Dendritic cell treated with granulocyte-macrophage colony-stimulating factor and Interleukin-4, amounts not matched to agents 40 ng/mL and 50 ng/mL, for 4 days (primary cell): ENCODE measurements at regions of chr3 and their contacts with region 1.

Region 1: DNA sequence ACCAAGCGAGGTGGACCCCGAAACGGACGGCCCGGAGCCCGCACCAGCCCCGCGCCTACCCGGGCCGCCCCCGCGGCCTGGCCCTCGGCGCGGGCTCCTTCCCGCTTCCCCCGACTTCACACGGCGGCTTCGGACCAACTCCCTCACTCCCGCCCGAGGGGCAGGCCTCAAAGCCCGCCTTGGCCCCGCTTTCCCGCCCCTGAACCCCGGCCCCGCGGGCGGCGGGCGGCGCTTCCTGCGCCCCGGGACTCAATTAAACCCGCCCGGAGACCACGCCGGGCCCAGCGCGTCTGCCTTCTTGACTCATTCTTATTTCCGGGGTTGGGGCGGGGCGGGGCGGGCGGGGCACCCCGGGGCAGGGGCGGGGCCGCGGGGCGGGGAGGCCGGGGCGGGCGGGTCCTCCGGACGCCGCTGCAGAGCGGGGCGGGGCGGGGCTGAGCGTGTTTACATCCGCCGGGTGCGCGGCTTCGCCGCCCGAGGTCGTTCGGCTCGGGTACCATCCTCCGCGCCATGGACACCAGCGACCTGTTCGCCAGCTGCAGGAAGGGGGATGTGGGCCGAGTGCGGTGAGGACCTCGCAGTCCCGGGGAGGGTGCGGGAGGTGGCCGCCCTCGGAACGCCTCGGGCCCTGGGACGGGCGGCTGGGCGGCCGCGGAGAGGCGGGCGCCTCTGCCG is at the start of gene ABTB1:
- H3K4me3 Mint-ChIP-seq: peak within 1 kb of the TSS; percentile 81
- H3K27ac Mint-ChIP-seq: peak within 1 kb of the TSS; percentile 89
- H3K4me1 Mint-ChIP-seq: peaks cover 56% of the 10 kb centered on the region
- H3K27me3 Mint-ChIP-seq: no peaks in the 10 kb centered on the region

Region 2: DNA sequence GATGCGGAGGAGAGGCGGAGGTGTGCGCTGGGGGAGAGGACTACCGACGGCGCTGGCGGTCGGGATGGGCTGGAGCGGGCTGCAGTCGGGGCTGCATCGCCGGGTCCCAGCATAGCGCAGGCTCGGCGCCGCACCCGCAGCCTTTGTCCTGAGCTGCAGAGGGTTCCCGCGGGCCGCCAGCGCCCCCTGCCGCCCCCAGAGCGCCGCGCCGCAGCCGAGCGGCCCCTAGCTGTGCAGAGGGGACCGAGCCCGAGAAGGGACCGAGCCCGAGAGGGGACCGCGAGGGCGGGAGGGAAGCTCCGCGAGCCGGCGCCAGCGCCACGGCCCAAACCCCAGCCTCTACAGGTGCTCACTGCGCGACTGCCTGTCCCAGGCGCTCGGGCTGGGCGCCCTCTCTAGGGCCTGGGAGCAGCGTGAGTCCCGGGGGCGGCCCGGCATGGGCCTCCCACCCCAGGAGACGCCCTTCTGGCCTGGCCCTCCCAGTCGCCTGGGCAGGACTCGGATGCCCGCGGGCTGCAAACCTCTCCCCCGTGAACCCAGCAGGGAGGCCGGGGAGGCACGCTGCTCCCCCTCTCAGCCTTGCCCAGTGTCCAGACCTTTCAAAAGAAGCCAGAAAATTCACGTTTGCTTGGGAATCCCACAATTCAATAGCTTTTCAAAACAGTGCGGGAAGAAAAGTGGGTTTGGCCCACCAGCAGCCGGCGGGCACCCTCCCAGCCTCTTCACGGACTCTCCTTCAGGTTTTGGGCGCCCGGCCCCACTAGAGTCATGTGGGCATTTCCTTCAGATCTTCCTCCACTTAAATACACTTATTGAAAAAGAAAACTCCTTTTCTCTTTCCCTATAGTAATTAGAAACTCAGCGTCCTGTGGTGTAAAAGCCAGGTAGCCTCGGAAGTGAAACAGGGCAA is 216.9 kb before region 1 on chr3:
- intact Hi-C with region 1: no loop called
- H3K4me3 Mint-ChIP-seq: no peak overlapping the region
- H3K27ac Mint-ChIP-seq: no peak overlapping the region
- H3K4me1 Mint-ChIP-seq: peaks cover 18% of the 10 kb centered on the region
- H3K27me3 Mint-ChIP-seq: peaks cover 71% of the 10 kb centered on the region

Region 3: DNA sequence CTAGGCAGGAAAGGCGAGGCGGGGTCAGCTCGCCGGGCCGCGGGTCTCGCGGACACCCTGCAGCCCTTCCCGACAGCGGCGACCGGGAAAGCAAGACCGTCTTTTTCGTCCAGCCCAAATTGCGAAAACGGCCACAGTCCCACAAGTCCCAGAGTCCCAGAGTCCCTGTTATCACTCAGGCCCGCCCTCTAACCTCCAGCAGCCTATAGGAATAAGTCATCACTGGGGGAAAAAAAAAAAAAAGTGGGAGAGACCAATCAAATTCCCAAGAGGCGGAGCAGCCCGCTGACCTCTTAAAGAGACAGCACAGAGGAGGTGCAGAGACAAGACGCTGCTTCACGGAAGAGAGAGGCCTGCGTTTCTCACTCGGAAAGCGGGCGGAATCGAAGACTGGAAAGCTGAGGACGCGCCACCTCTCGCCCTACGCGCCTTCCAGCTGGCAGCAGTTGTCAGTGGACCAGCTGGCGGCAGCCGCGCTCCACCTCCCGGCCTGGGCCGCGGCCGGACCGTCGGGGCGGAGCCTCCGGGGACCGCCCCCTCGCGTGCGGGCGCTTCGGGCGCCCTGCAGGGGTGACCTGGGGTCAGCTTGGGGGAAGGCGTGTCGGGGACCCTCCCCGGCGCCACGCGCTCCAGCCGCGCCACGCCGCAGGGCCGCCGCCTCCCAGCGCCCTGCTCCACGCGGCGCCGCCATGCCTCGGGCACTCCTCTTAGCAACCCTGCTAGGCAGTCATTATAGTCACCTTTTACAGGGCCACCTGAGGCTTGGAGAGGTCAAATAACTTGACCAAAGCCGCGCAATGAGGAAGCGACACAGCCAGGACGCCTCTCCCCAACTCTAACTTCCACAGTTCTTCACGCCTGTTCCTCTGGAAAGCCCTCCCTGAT is 81.8 kb before region 1 on chr3 and contains the start of gene TPRA1:
- intact Hi-C with region 1: loop called (anchors 5 kb)
- H3K4me3 Mint-ChIP-seq: peak within 1 kb of the TSS; percentile 87
- H3K27ac Mint-ChIP-seq: peak within 1 kb of the TSS; percentile 98
- H3K4me1 Mint-ChIP-seq: peaks cover 54% of the 10 kb centered on the region
- H3K27me3 Mint-ChIP-seq: no peaks in the 10 kb centered on the region

Region 4: GRCh38 chr3:127615631-127616305 is 56.9 kb before region 1 on chr3:
- intact Hi-C with region 1: no loop called
- H3K4me3 Mint-ChIP-seq: no peak overlapping the region
- H3K27ac Mint-ChIP-seq: no peak overlapping the region
- H3K4me1 Mint-ChIP-seq: no peaks in the 10 kb centered on the region
- H3K27me3 Mint-ChIP-seq: no peaks in the 10 kb centered on the region

Region 5: DNA sequence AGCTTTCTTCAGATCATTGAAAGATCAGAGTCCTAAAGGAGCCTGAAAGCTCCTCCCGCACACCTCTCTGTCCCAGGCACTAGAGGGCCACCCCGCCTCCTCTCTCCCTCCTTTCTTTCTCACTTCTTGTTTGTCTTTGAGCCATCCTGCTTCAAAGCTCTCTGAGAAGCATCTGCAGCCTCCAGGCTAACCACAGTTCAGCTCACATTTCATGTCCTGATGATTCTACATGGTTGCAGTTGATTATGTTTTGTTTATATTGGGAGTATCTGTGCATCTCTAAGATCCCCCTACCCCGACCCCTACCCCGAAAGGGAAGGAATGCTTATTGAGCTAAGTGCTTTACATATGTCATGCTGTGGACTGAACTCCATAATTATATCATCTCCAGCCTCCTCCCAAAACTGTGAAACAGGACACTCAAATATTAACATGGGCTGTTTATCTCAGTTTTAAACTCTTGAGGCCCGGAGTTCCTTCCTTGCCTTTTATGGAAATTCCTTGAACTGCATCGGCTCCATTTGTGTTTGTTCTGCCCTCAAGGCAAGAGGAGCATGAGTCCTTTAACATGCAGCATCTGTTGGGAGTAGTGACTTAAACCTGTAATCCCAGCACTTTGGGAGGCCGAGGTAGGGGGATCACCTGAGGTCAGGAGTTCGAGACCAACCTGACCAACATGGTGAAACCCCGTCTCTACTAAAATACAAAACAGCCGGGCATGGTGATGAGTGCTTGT is 118.7 kb after region 1 on chr3:
- intact Hi-C with region 1: no loop called
- H3K4me3 Mint-ChIP-seq: no peak overlapping the region
- H3K27ac Mint-ChIP-seq: peak overlapping the region; percentile 30
- H3K4me1 Mint-ChIP-seq: peaks cover 44% of the 10 kb centered on the region
- H3K27me3 Mint-ChIP-seq: peaks cover 5% of the 10 kb centered on the region

Region 6: GRCh38 chr3:128051837-128052594 is 379.4 kb after region 1 on chr3 and contains the start of gene SEC61A1:
- intact Hi-C with region 1: loop called (anchors 5 kb)
- H3K4me3 Mint-ChIP-seq: peak within 1 kb of the TSS; percentile 82
- H3K27ac Mint-ChIP-seq: peak within 1 kb of the TSS; percentile 86
- H3K4me1 Mint-ChIP-seq: peaks cover 39% of the 10 kb centered on the region
- H3K27me3 Mint-ChIP-seq: peaks cover 4% of the 10 kb centered on the region